Activated T-helper 1 cell treated with anti-CD3 and anti-CD28 coated beads, Interleukin-12 subunit alpha, Interleukin-12 subunit beta, Interleukin-2, Interleukin-4 antibody, amounts not matched to agents 30 ng/mL and 10 ng/mL and 1 ng/mL, durations not matched to agents 14 hours and 24 hours and 36 hours (primary cell): ENCODE measurements at regions of chr2 and their contacts with region 1.

Region 1: DNA sequence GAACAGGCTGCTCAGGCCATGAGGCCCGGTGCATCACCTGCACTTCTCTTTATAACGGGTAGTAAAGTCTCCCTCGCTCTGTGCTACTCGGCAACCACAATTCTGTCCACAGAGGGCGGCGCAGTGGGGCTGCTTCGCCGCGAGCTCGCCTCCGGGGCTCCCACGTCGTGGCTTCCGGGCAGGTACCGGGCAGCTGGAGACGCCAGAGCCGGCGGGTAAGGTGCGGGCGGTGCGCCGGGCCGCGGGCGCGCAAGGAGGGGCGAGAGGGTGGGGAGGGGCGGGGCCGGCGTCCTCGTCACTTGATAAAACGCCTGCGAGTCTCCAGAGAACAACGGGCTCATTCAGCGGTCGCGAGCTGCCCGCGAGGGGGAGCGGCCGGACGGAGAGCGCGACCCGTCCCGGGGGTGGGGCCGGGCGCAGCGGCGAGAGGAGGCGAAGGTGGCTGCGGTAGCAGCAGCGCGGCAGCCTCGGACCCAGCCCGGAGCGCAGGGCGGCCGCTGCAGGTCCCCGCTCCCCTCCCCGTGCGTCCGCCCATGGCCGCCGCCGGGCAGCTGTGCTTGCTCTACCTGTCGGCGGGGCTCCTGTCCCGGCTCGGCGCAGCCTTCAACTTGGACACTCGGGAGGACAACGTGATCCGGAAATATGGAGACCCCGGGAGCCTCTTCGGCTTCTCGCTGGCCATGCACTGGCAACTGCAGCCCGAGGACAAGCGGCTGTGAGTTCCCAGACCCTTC is at the start of gene ITGA6:
- DNase-seq: peak; percentile 66
- H3K4me3 Mint-ChIP-seq: peak within 1 kb of the TSS; percentile 85
- H3K27ac Mint-ChIP-seq: peak within 1 kb of the TSS; percentile 70
- H3K4me1 Mint-ChIP-seq: peaks cover 45% of the 10 kb centered on the region
- H3K27me3 Mint-ChIP-seq: peaks cover 34% of the 10 kb centered on the region
- total RNA-seq, gene ITGA6: 1.9 TPM in 2 replicates

Region 2: GRCh38 chr2:172253190-172254052 is 174.0 kb before region 1 on chr2:
- intact Hi-C with region 1: loop called (anchors 5 kb)
- DNase-seq: peak; percentile 53
- H3K4me3 Mint-ChIP-seq: no peak overlapping the region
- H3K27ac Mint-ChIP-seq: peak overlapping the region; percentile 62
- H3K4me1 Mint-ChIP-seq: peaks cover 49% of the 10 kb centered on the region
- H3K27me3 Mint-ChIP-seq: no peaks in the 10 kb centered on the region

Region 3: GRCh38 chr2:172442072-172442895 is 14.9 kb after region 1 on chr2:
- intact Hi-C with region 1: loop called (anchors 1 kb)
- DNase-seq: no peak
- H3K4me3 Mint-ChIP-seq: peak overlapping the region; percentile 63
- H3K27ac Mint-ChIP-seq: peak overlapping the region; percentile 25
- H3K4me1 Mint-ChIP-seq: peaks cover 26% of the 10 kb centered on the region
- H3K27me3 Mint-ChIP-seq: peaks cover 6% of the 10 kb centered on the region